ENCODE measurements at regions of chr1 and their contacts with region 1.

Region 1: GRCh38 chr1:163315773-163316374 is 5.9 kb upstream of the NUF2 start:
- DNase-seq: no peak
- ATAC-seq: no peak
- H3K4me3 Mint-ChIP-seq: no peak overlapping the region
- H3K27ac Mint-ChIP-seq: no peak overlapping the region
- H3K4me1 Mint-ChIP-seq: peaks cover 3% of the 10 kb centered on the region
- H3K27me3 Mint-ChIP-seq: no peaks in the 10 kb centered on the region
- CTCF ChIP-seq: no peak

Region 2: GRCh38 chr1:162847839-162848453 is 467.9 kb before region 1 on chr1:
- CTCF ChIA-PET with region 1: interaction called, 48 read pairs
- POLR2A ChIA-PET with region 1: no interaction called
- intact Hi-C with region 1: no loop called
- DNase-seq: peak; percentile 53
- ATAC-seq: no peak
- H3K4me3 Mint-ChIP-seq: no peak overlapping the region
- H3K27ac Mint-ChIP-seq: no peak overlapping the region
- H3K4me1 Mint-ChIP-seq: no peaks in the 10 kb centered on the region
- H3K27me3 Mint-ChIP-seq: peaks cover 15% of the 10 kb centered on the region
- CTCF ChIP-seq: peak; percentile 68

Region 3: GRCh38 chr1:162854245-162854882 is 461.5 kb before region 1 on chr1:
- CTCF ChIA-PET with region 1: interaction called, 48 read pairs
- POLR2A ChIA-PET with region 1: no interaction called
- intact Hi-C with region 1: loop called (anchors 1 kb)
- DNase-seq: no peak
- ATAC-seq: peak; percentile 50
- H3K4me3 Mint-ChIP-seq: no peak overlapping the region
- H3K27ac Mint-ChIP-seq: no peak overlapping the region
- H3K4me1 Mint-ChIP-seq: no peaks in the 10 kb centered on the region
- H3K27me3 Mint-ChIP-seq: peaks cover 9% of the 10 kb centered on the region
- CTCF ChIP-seq: no peak

Region 4: DNA sequence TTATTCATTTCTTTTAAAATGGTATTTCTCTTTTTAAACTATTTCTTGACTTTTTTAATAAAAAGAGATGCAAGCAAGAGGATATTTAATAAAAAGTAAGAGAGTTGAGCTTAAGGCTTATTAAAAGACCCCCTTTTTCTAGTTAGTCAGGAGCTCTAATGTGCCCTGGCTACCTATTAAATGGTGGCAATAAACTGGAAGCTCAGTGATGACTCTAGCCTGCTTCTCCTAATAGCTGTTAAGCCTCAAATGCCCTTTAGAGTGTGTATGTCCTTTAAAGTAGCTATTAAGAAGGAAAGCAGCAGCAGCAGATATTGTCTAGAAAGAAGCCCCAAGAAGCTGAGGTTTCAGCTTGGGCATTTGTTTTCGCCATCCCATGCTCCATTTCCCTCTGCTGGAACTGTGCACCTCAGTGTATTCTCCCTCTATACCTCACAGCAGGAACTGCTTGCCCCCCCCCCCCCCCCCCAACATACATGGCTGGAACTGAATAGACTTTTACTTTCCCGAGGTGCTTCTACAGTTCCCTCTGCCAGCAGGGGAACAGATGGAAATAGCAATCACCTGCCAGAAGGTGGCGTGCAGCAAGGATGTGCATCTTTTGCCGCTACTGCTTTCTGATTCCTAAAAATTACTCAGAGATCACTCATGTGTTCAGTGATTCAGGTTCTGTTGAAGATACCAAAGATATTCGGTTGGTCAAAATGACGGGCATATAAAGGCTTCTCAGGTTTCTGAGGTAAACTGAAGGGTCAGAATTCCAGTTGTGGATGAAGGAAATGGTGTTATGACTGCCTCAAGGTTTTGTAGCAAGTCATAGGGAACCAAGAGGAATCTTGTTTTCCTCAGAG is 244.2 kb before region 1 on chr1:
- CTCF ChIA-PET with region 1: interaction called, 17 read pairs
- POLR2A ChIA-PET with region 1: no interaction called
- intact Hi-C with region 1: no loop called
- DNase-seq: no peak
- ATAC-seq: no peak
- H3K4me3 Mint-ChIP-seq: no peak overlapping the region
- H3K27ac Mint-ChIP-seq: no peak overlapping the region
- H3K4me1 Mint-ChIP-seq: no peaks in the 10 kb centered on the region
- H3K27me3 Mint-ChIP-seq: peaks cover 37% of the 10 kb centered on the region
- CTCF ChIP-seq: no peak